ENCODE measurements at regions of chr7 and their contacts with region 1.

Region 1: GRCh38 chr7:73451780-73452398 is 18.3 kb downstream of the FZD9 start:
- DNase-seq: no peak
- H3K4me3 ChIP-seq: no peak overlapping the region
- H3K27ac ChIP-seq: no peak overlapping the region
- H3K4me1 ChIP-seq: no peaks in the 10 kb centered on the region
- H3K27me3 ChIP-seq: no peaks in the 10 kb centered on the region
- CTCF ChIP-seq: peak; percentile 99

Region 2: GRCh38 chr7:73316521-73316920 is 135.4 kb before region 1 on chr7:
- intact Hi-C with region 1: loop called (anchors 5 kb)
- DNase-seq: no peak
- H3K4me3 ChIP-seq: no peak overlapping the region
- H3K27ac ChIP-seq: no peak overlapping the region
- H3K4me1 ChIP-seq: no peaks in the 10 kb centered on the region
- H3K27me3 ChIP-seq: no peaks in the 10 kb centered on the region
- CTCF ChIP-seq: no peak

Region 3: DNA sequence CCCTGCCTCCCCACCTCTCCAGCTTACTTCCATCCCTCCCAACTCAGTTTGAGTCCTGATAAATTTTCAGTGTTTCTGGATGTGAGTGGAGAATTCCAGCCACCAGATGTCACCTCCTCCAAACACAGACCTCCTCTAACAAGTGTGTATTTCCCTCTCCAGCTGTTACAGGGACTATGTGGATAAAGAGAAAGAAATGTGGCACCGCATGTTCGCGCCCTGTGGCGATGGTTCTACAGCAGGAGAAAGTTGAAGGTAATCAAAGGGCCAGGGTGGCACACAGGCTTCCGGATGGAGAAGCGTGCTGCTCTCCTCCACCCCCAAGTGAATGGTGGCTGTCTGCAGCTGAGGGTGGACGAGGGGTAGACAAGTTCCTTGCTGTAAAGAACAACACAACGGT is 109.2 kb before region 1 on chr7:
- intact Hi-C with region 1: loop called (anchors 5 kb)
- DNase-seq: no peak
- H3K4me3 ChIP-seq: no peak overlapping the region
- H3K27ac ChIP-seq: no peak overlapping the region
- H3K4me1 ChIP-seq: no peaks in the 10 kb centered on the region
- H3K27me3 ChIP-seq: no peaks in the 10 kb centered on the region
- CTCF ChIP-seq: no peak

Region 4: DNA sequence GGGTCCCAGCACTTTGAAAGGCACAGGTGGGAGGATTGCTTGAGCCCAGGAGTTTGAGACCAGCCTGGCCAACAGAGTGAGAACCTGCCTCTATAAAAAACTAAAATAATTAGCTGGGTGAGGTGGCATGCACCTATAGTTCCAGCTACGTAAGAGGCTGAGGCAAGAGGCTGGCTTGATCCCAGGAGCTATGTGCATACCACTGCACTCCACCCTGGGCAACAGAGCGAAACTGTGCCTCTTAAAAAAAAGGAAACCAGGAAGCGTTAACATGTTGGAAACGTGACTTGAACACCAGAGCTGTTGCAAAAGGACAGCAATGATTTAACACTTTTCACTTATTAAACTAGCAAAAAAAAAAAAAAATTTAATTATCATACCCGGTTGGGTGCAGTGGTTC is 57.6 kb after region 1 on chr7:
- intact Hi-C with region 1: loop called (anchors 10 kb)
- DNase-seq: no peak
- H3K4me3 ChIP-seq: no peak overlapping the region
- H3K27ac ChIP-seq: no peak overlapping the region
- H3K4me1 ChIP-seq: no peaks in the 10 kb centered on the region
- H3K27me3 ChIP-seq: no peaks in the 10 kb centered on the region
- CTCF ChIP-seq: no peak

Region 5: GRCh38 chr7:74012842-74013249 is 561.0 kb after region 1 on chr7:
- intact Hi-C with region 1: no loop called
- DNase-seq: no peak
- H3K4me3 ChIP-seq: no peak overlapping the region
- H3K27ac ChIP-seq: no peak overlapping the region
- H3K4me1 ChIP-seq: no peaks in the 10 kb centered on the region
- H3K27me3 ChIP-seq: no peaks in the 10 kb centered on the region
- CTCF ChIP-seq: no peak

Region 6: DNA sequence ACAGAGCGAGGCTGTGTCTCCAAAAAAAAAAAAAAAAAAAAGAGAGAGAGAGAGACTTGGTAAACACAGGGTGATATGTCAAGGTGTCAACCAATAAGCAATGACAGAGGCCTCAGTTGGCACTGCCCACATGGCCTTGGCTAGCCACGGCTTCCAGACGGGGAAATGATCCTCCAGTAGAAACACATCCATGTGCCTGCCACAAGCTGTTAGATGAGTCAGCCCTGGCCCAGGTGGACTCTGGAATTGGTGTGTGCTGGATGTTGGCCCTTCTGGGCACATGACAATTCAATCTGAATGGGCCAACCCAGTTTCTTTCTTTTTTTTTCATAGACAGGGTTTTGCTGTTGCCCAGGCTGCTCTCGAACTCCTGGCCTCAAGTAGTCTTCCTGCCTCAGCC is 788.6 kb after region 1 on chr7:
- intact Hi-C with region 1: no loop called
- DNase-seq: no peak
- H3K4me3 ChIP-seq: no peak overlapping the region
- H3K27ac ChIP-seq: no peak overlapping the region
- H3K4me1 ChIP-seq: no peaks in the 10 kb centered on the region
- H3K27me3 ChIP-seq: no peaks in the 10 kb centered on the region
- CTCF ChIP-seq: no peak